ENCODE measurements at regions of chr15 and their contacts with region 1.

Region 1: GRCh38 chr15:90320061-90320884 is 31.8 kb upstream of the ZNF774 start:
- DNase-seq: peak; percentile 78 to 90
- ATAC-seq: peak; percentile 90 to 94 (median 92)
- H3K4me3 ChIP-seq: peak overlapping the region; percentile 42
- H3K27ac ChIP-seq: peak overlapping the region; percentile 27
- H3K4me1 ChIP-seq: peaks cover 19% of the 10 kb centered on the region
- H3K27me3 ChIP-seq: no peaks in the 10 kb centered on the region
- CTCF ChIP-seq: peak; percentile 97

Region 2: GRCh38 chr15:90352109-90352893 is 32.0 kb after region 1 on chr15 and contains the start of gene ZNF774:
- intact Hi-C with region 1: no loop called
- DNase-seq: peak; percentile 90 to 96
- ATAC-seq: peak; percentile 94 to 98 (median 97)
- H3K4me3 ChIP-seq: peak within 1 kb of the TSS; percentile 86
- H3K27ac ChIP-seq: peak within 1 kb of the TSS; percentile 95
- H3K4me1 ChIP-seq: no peaks in the 10 kb centered on the region
- H3K27me3 ChIP-seq: no peaks in the 10 kb centered on the region
- CTCF ChIP-seq: no peak
- total RNA-seq, gene ZNF774: 7.6 to 19.6 (median 11.8) TPM

Region 3: GRCh38 chr15:90482124-90483011 is 162.1 kb after region 1 on chr15:
- intact Hi-C with region 1: loop called (anchors 2 to 5 kb)
- DNase-seq: no peak
- ATAC-seq: peak in 3 of 4 donors; percentile 32 to 69 (median 58)
- H3K4me3 ChIP-seq: no peak overlapping the region
- H3K27ac ChIP-seq: no peak overlapping the region
- H3K4me1 ChIP-seq: no peaks in the 10 kb centered on the region
- H3K27me3 ChIP-seq: no peaks in the 10 kb centered on the region
- CTCF ChIP-seq: peak; percentile 58

Region 4: DNA sequence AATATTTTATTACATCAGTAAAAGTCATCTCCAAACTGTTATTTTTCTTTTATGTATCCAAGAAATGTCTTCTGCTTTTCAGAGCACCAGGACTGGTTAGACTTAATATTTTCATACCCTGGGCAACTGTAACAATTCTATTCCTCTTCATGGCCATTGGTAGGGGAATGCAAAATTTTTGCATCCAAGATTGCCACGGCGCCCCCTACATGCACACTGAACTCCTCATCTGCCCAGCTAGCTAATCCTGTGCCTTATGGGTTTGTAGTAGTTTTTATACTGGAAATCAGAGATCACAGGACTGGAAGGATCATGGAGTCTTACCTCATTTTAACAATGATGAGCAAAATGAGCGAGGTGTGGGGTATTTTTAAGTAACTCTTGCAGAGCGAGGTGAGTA is 283.6 kb after region 1 on chr15:
- intact Hi-C with region 1: loop called in 1 of 2 experiments (anchors 10 kb)
- DNase-seq: no peak
- ATAC-seq: no peak
- H3K4me3 ChIP-seq: no peak overlapping the region
- H3K27ac ChIP-seq: no peak overlapping the region
- H3K4me1 ChIP-seq: peaks cover 8% of the 10 kb centered on the region
- H3K27me3 ChIP-seq: no peaks in the 10 kb centered on the region
- CTCF ChIP-seq: peak; percentile 29

Region 5: GRCh38 chr15:90869601-90870353 is 549.5 kb after region 1 on chr15:
- intact Hi-C with region 1: no loop called
- DNase-seq: peak; percentile 77 to 84
- ATAC-seq: peak; percentile 59 to 70 (median 62)
- H3K4me3 ChIP-seq: peak overlapping the region; percentile 82
- H3K27ac ChIP-seq: peak overlapping the region; percentile 93
- H3K4me1 ChIP-seq: peaks cover 39% of the 10 kb centered on the region
- H3K27me3 ChIP-seq: no peaks in the 10 kb centered on the region
- CTCF ChIP-seq: no peak

Measured in psoas muscle (tissue), 8 donors.